ENCODE measurements at regions of chr2 and their contacts with region 1.

Region 1: DNA sequence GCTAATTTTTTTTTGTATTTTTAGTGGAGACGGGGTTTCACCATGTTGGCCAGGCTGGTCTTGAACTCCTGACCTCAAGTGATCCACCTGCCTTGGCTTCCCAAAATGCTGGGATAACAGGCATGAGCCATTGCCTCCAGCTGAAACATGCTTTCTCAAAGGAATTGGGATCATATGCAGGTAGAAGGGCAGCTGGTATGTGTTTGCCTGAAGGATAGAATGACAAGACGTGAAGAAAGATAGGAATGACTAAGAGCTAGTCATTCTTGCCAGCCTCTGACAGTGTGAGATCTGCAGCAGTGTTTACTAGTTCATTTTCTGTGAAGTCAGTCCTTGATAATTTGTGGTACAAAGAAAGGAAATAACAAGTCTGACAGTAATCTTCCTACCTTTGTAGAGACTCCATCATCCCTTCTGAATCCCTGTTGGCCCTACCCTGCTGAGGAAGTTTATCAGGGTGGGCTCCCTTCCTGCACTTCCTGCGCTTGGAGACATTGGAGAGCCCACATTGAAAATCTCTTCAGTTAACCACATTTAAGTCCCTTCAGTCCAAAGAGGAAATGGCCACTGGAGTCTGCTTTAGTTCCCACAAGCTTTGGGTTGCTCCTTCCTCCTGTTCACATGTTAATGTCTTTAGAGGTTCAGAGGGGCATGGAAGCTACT is 14.7 kb downstream of the CFLAR start:
- DNase-seq: no peak
- H3K4me3 Mint-ChIP-seq: peak overlapping the region; percentile 90
- H3K27ac Mint-ChIP-seq: peak overlapping the region; percentile 92
- H3K4me1 Mint-ChIP-seq: peaks cover 50% of the 10 kb centered on the region
- H3K27me3 Mint-ChIP-seq: no peaks in the 10 kb centered on the region

Region 2: DNA sequence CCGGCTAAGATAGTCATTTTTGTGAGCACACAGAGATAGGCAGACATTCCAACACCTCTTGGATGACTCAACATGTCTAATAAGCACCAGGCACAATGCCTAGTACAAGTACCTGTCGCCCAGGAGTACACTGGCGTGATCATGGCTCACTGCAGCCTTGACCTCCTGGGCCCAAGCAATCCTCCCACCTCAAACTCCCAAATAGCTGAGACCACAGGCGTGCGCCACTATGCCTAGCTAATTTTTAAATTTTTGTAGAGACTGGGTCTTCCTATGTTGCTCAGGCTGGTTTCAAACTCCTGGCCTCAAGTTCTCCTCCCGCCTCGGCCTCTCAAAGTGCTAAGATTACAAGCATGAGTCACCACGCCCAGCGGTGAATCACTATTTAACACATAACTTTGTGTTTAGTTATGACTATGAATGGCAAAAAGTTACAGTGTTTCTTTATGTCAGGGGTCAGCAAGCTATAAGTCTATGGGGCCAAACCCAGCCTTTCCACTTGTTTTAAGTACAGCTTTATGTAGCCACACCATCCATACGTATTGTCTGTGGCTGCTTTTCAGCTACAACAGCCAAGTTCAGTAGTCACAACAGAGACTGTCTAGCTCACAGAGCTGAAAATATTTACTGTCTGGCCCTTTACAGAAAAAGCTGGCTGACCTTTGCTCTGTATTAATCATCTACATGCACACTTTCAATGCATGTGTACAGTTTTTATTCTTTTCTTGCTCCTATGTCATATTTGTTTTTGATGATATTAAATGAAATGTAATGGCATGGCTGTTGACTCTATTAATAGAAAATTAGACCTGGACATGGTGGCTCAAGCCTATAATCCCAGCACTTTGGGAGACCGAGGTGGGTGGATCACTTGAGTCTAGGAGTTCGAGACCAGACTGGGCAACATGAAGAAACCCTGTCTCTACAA is 185.9 kb before region 1 on chr2:
- intact Hi-C with region 1: loop called (anchors 2 kb)
- DNase-seq: no peak
- H3K4me3 Mint-ChIP-seq: no peak overlapping the region
- H3K27ac Mint-ChIP-seq: peak overlapping the region; percentile 87
- H3K4me1 Mint-ChIP-seq: peaks cover 25% of the 10 kb centered on the region
- H3K27me3 Mint-ChIP-seq: no peaks in the 10 kb centered on the region

Region 3: GRCh38 chr2:201118121-201118960 is 12.3 kb before region 1 on chr2:
- intact Hi-C with region 1: loop called (anchors 1 kb)
- DNase-seq: peak; percentile 76
- H3K4me3 Mint-ChIP-seq: peak overlapping the region; percentile 94
- H3K27ac Mint-ChIP-seq: peak overlapping the region; percentile 95
- H3K4me1 Mint-ChIP-seq: peaks cover 42% of the 10 kb centered on the region
- H3K27me3 Mint-ChIP-seq: no peaks in the 10 kb centered on the region

Region 4: GRCh38 chr2:201151127-201151981 is 20.7 kb after region 1 on chr2:
- intact Hi-C with region 1: loop called (anchors 2 kb)
- DNase-seq: no peak
- H3K4me3 Mint-ChIP-seq: no peak overlapping the region
- H3K27ac Mint-ChIP-seq: peak overlapping the region; percentile 70
- H3K4me1 Mint-ChIP-seq: peaks cover 29% of the 10 kb centered on the region
- H3K27me3 Mint-ChIP-seq: no peaks in the 10 kb centered on the region

Measured in activated T-helper 2 cell treated with anti-CD3 and anti-CD28 coated beads, Interferon-gamma antibody, Interleukin-2, Interleukin-4, amounts not matched to agents 10 μg/mL and 5 μg/mL and 100 μg/mL, durations not matched to agents 14 hours and 24 hours and 36 hours (primary cell).